AG04450 (cell line): ENCODE measurements at regions of chr14 and their contacts with region 1.

Region 1: DNA sequence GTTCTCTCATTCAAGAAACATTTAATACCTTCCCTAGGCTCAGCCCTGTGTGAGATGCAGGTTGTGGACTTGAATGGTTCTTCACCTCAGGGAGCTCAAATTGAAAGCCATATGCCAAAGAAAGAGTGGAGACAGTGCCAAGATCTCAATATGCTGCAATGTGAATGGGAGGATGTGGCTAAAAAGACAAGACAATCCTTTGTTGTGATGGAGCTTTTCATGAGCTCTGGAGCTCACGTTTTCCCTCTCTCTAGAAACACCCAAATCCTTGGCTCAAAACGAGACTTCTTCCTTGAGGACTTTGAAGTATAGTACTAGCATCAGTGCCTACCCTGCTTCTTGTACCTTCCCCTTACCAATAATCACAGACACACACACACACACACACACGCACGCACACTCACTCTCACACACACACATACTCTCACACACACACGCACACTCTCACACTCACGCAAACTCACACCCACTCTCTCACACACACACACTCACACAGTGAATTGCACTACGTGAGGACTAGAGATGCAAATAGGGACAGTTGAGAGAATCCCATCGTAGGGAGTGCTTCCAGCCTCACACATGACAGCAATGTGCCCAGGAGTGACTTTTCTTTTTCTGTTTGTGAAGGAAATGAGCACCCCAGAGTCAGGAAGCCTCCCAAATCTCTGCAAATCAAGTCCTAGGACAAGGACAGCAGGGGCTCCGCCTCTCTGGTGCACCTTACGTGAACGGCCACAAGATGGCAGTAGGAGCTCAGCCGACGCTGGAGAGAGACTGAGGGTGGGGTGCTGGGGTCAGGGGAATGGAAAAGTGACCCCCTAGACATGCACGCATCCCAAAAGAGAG is 231.4 kb downstream of the PCNX1 start:
- DNase-seq: peak; percentile 13
- H3K4me3 ChIP-seq: no peak overlapping the region; the same call in 1 of the 2 replicates
- H3K27ac ChIP-seq: no peak overlapping the region
- H3K27me3 ChIP-seq: no peaks in the 10 kb centered on the region
- CTCF ChIP-seq: peak; percentile 96

Region 2: DNA sequence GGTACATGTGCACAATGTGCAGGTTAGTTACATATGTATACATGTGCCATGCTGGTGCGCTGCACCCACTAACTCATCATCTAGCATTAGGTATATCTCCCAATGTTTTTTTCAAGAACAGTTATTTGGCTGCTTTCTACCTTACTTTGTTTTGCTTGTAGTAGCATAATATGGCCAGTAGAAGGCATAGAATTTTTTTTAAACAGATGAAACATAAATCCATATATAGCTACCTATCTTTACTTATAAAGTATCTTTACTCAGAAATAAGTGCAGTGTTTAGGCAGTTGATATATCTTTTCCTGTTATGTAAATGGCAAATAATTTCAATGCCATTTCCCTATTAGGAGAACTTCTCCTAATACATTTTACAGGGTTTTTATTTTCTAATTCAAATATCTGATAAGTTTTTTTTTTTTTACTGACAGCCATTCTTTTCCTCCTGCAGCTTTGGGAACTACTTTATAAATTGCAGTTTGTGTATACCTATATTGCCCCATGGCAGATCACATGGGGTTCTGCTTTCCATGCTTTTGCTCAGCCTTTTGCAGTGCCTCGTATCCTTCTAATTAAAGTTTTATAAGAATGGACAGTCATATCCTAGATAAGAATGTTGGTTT is 88.4 kb before region 1 on chr14:
- CTCF ChIA-PET with region 1: no interaction called
- POLR2A ChIA-PET with region 1: no interaction called
- DNase-seq: no peak
- H3K4me3 ChIP-seq: no peak overlapping the region
- H3K27ac ChIP-seq: no peak overlapping the region
- H3K27me3 ChIP-seq: no peaks in the 10 kb centered on the region
- CTCF ChIP-seq: peak; percentile 50

Region 3: DNA sequence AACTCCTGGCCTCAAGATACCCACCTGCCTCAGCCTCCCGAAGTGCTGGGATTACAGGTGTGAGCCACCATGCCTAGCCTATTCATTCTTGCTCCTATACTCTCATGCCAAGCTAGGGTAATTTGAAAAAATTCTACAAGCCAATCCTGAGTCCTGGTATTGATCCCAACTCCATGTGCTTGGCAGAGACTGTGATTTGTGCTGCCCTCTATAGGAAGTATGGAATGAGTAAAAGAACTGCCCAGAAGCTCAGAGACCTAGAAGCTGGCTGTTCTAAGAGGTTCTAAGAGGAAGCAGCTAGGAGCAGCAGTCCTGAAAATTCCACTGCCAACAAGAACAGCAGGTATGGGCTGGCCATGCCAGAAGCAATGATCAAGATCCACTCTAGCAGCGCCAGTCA is 171.1 kb after region 1 on chr14:
- CTCF ChIA-PET with region 1: no interaction called
- POLR2A ChIA-PET with region 1: no interaction called
- DNase-seq: no peak
- H3K4me3 ChIP-seq: no peak overlapping the region
- H3K27ac ChIP-seq: no peak overlapping the region
- H3K27me3 ChIP-seq: no peaks in the 10 kb centered on the region
- CTCF ChIP-seq: 0 out of 2 replicates have a peak, but pooled peaks have one; percentile 11

Region 4: GRCh38 chr14:71320107-71320733 is 181.5 kb after region 1 on chr14:
- CTCF ChIA-PET with region 1: interaction called, 6 read pairs
- POLR2A ChIA-PET with region 1: interaction called, 14 read pairs
- DNase-seq: peak; percentile 99
- H3K4me3 ChIP-seq: peak within 1 kb of the TSS; percentile 91
- H3K27ac ChIP-seq: peak within 1 kb of the TSS; percentile 85
- H3K27me3 ChIP-seq: no peaks in the 10 kb centered on the region
- CTCF ChIP-seq: no peak

Region 5: DNA sequence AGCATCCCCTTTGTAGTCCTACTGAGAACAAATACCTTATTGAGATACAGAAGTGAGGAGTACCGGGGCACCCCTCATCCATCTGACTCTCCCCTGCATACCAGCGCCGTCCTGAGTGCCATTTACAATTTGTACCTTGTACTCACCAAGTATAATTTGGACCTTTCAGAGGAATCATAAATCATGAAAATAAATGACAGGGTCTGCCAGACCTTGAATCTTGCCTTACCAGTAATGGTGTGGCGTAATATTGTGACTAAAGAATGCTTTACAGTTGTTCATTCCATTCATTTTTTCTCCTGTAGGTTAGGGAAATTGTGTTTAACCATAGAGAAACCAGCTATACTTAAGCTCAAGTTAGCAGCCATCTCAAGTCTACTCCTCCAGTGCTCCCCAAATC is 549.9 kb after region 1 on chr14:
- CTCF ChIA-PET with region 1: interaction called, 10 read pairs
- POLR2A ChIA-PET with region 1: no interaction called
- DNase-seq: no peak
- H3K4me3 ChIP-seq: no peak overlapping the region
- H3K27ac ChIP-seq: no peak overlapping the region
- H3K27me3 ChIP-seq: no peaks in the 10 kb centered on the region
- CTCF ChIP-seq: no peak

Region 6: GRCh38 chr14:71742485-71742884 is 603.8 kb after region 1 on chr14:
- CTCF ChIA-PET with region 1: interaction called, 13 read pairs
- POLR2A ChIA-PET with region 1: no interaction called
- DNase-seq: no peak
- H3K4me3 ChIP-seq: no peak overlapping the region
- H3K27ac ChIP-seq: no peak overlapping the region
- H3K27me3 ChIP-seq: no peaks in the 10 kb centered on the region
- CTCF ChIP-seq: no peak